GM13976 (cell line): ENCODE measurements at regions of chr18 and their contacts with region 1.

Region 1: DNA sequence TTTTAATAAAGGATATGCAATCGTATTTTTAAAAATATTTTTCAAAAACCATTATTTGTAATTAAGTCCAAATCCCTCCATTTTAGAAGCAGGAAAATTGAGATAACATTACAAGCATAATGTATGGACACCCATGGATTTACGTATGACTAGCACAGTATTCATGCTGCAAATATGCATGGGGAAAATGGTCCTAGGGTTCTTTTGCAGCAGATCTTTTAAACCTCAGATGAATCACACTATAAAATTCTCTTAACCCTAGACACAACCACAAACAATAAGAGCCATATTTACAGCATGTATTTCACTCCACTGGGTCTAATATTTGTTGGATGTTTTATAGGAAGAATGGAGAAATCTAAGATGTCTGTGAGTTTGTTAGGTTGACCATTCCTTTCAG is 453.4 kb downstream of the TGIF1 start:
- DNase-seq: no peak
- CTCF ChIP-seq: no peak

Region 2: GRCh38 chr18:3816610-3817363 is 86.5 kb before region 1 on chr18:
- in situ Hi-C with region 1: loop called (anchors 25 kb)
- DNase-seq: no peak
- CTCF ChIP-seq: no peak